ENCODE measurements at regions of chr7 and their contacts with region 1.

Region 1: DNA sequence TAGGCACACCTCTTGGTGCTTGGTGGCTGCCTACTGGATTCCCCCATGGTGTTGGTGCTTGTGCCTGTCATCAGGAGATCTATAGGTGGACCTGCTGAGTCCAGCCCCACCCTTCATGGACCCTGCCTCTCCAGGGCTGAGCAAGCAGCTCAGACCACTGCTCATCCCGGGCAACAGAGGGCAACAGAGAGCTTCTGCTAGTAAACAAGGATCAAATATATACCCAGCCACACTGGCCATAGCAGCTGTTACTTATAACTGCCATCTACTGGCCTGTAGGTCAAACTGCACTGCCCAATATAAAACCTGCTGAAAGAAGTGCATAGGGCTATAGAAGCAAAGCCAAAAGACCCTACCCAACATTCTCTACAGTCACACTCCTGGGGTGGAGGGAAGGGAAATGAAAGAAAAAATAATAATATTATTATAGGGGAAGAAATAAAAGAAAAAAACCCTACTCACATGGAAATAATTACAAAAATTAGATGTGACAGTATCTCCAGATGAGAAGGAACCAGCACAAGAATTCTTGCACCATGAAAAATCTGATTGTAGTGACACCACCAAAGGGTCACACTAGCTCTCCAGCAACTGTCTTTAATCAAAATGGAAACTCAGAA is 54.9 kb upstream of the ZNF800 start:
- DNase-seq: peak; percentile 62 to 68 (median 65)
- H3K4me3 ChIP-seq: no peak overlapping the region
- H3K4me3 Mint-ChIP-seq: no peak overlapping the region
- H3K27ac ChIP-seq: no peak overlapping the region
- H3K27ac Mint-ChIP-seq: peak overlapping the region in 1 of 7 donors; percentile 43
- H3K4me1 ChIP-seq: peaks cover 17% of the 10 kb centered on the region
- H3K4me1 Mint-ChIP-seq: peaks cover 9 to 18% (median 15%) of the 10 kb centered on the region in 4 donors
- H3K27me3 ChIP-seq: no peaks in the 10 kb centered on the region
- H3K27me3 Mint-ChIP-seq: peaks cover 7 to 10% of the 10 kb centered on the region in 2 donors

Region 2: DNA sequence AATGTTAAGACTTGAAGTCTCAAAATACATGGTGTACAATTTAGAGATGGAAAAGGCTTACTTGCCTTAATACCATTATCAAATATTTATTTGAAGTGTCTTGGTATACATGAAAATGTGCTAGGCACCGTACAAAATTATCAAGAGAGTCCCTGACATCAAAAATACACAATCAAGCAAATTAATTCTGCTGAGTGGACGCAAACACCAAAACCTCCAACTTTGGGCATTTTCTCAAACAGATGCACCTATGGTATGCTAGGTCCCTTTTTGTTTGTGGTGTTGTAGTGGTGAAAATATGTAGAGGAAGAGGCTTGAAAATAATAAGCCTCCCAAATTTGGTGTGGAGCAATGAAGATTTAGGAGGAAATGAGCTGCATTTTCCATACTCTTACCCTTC is 79.8 kb before region 1 on chr7:
- CTCF ChIA-PET with region 1: interaction called, 11 read pairs
- POLR2A ChIA-PET with region 1: no interaction called
- intact Hi-C with region 1: no loop called
- DNase-seq: no peak
- H3K4me3 ChIP-seq: no peak overlapping the region
- H3K4me3 Mint-ChIP-seq: no peak overlapping the region
- H3K27ac ChIP-seq: no peak overlapping the region
- H3K27ac Mint-ChIP-seq: peak overlapping the region in 2 of 7 donors; percentile 18 to 49
- H3K4me1 ChIP-seq: peaks cover 15% of the 10 kb centered on the region
- H3K4me1 Mint-ChIP-seq: peaks cover 18 to 39% (median 27%) of the 10 kb centered on the region in 4 donors
- H3K27me3 ChIP-seq: no peaks in the 10 kb centered on the region
- H3K27me3 Mint-ChIP-seq: no peaks in the 10 kb centered on the region

Region 3: DNA sequence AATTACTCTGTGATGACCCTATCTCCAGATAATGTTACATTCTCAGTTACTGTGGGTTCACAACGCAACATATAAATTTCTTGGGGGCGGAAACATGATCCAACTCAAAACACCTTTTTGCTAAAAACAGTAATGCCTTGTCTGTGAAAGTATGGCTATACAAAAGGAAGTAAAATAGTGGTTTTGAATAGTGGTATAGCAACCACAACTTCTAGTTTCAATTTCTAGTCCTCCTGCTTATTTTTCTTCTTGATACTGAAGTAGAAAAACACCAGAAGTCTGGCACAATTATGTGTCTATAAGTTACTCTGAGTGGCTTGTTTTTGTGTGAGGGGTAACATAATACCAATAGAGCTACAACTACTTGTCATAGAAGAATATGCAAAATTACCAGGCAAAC is 33.5 kb before region 1 on chr7:
- CTCF ChIA-PET with region 1: interaction called, 14 read pairs
- POLR2A ChIA-PET with region 1: no interaction called
- intact Hi-C with region 1: loop called (anchors 5 kb)
- DNase-seq: peak in 4 of 5 donors; percentile 49 to 66 (median 56)
- H3K4me3 ChIP-seq: no peak overlapping the region
- H3K4me3 Mint-ChIP-seq: peak overlapping the region; percentile 3 to 83 (median 54)
- H3K27ac ChIP-seq: peak overlapping the region; percentile 37
- H3K27ac Mint-ChIP-seq: peak overlapping the region; percentile 79 to 93 (median 93)
- H3K4me1 ChIP-seq: peaks cover 34% of the 10 kb centered on the region
- H3K4me1 Mint-ChIP-seq: peaks cover 35 to 51% (median 39%) of the 10 kb centered on the region in 4 donors
- H3K27me3 ChIP-seq: no peaks in the 10 kb centered on the region
- H3K27me3 Mint-ChIP-seq: no peaks in the 10 kb centered on the region

Measured in CD4-positive, alpha-beta memory T cell (primary cell).